Activated naive CD4-positive, alpha-beta T cell treated with anti-CD3 and anti-CD28 coated beads for 36 hours (primary cell): ENCODE measurements at regions of chr1 and their contacts with region 1.

Region 1: GRCh38 chr1:8396786-8397406 is 79.0 kb downstream of the SLC45A1 start:
- DNase-seq: peak; percentile 71
- H3K4me3 Mint-ChIP-seq: peak overlapping the region; percentile 10
- H3K27ac Mint-ChIP-seq: peak overlapping the region; percentile 83
- H3K4me1 Mint-ChIP-seq: peaks cover 71% of the 10 kb centered on the region
- H3K27me3 Mint-ChIP-seq: no peaks in the 10 kb centered on the region

Region 2: DNA sequence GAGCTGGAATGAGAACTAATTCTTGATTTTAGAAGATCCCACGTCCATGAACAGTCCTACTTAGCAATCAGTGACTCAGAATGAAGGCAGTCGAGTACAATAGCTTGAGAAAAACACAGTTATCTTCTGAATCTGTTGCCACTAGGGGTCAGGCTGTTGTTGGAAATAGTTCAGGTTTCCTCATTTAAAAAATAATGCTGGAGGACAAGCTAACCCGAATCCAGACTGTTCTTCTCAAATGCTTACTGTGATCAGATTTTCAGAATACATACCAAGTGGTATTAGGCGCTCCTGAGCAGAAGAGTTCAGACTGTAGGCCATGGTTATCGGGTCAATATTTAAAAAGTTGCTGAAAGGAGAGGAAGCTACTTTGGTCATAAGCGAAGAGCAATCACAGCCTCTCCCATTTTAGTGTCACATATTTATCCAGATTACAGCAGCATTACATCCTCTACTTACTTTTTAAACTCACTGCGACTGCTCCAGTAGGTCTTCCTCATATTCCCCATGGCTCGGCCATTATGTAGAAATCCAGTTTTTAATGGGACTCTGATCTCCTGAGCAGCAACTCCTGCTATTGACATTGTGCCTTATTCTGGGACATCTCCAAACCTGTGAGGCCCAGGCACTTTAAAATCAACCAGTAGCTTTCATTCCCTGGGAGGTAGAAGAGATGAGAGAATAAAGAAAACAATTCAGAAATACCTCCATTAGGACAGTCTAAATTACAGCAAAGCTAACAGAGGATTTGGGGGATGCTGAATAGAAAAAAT is 381.7 kb before region 1 on chr1:
- CTCF ChIA-PET with region 1: no interaction called
- intact Hi-C with region 1: no loop called
- DNase-seq: peak; percentile 56
- H3K4me3 Mint-ChIP-seq: no peak overlapping the region
- H3K27ac Mint-ChIP-seq: no peak overlapping the region
- H3K4me1 Mint-ChIP-seq: no peaks in the 10 kb centered on the region
- H3K27me3 Mint-ChIP-seq: peaks cover 14% of the 10 kb centered on the region

Region 3: DNA sequence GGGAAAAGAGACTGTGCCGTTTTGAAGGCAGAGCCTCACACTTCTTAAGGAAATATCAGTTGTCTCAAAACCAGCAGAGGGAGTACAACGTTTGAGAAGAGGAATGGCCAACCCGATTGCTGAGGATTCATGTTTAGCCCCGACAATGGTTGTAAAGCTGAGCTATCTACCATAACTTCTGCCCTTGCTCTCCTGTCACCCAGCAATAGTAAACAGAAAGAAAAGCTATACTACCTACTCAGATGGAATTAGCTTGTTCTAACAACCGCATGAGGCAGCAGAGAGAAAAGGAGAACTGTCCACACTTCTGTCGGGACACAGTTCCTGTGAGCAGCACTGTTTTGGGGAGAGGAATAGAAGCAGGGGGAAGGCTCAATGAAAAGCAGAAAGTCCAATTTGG is 12.2 kb after region 1 on chr1:
- CTCF ChIA-PET with region 1: interaction called, 9 read pairs
- intact Hi-C with region 1: loop called (anchors 1 kb)
- DNase-seq: peak; percentile 36
- H3K4me3 Mint-ChIP-seq: peak overlapping the region; percentile 47
- H3K27ac Mint-ChIP-seq: peak overlapping the region; percentile 67
- H3K4me1 Mint-ChIP-seq: peaks cover 70% of the 10 kb centered on the region
- H3K27me3 Mint-ChIP-seq: no peaks in the 10 kb centered on the region

Region 4: DNA sequence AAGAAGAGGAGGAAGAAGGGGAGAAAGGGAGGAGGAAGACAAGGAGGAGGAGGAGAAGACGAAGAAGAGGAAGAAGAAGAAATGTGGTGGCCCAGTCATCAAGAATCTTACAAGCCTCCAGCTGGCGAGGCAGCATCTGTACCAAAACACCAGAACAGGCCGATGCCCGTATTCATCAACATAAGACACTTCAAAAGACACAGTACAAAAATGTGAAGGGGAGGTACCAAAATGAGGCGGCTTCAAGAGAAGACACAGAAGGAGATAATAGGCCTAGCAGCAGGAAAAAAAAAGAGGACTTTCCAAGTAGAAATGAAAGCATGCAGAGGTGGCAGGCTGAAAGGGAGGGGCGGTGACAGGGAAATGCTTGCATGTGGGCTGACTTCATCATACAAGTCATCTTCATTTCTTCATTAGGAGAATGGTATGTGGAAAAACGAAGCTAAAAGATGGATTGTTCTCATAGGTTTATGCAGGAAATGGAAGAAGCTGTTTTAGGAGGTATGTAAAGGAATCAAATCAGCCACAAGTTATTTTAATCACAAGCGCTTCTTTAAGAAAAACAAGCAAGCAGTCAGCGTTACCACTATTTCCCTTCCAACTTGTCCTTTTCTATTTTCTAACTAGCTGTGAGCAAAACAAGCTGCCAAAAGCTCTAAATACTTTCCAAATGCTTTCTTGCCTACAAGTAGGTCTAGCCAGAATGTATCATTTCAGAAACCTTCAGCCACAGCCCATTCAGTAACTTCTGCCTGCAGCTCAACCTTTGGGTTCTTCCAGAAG is 113.3 kb after region 1 on chr1:
- CTCF ChIA-PET with region 1: no interaction called
- intact Hi-C with region 1: loop called (anchors 1 kb)
- DNase-seq: peak; percentile 81
- H3K4me3 Mint-ChIP-seq: peak overlapping the region; percentile 54
- H3K27ac Mint-ChIP-seq: peak overlapping the region; percentile 93
- H3K4me1 Mint-ChIP-seq: peaks cover 46% of the 10 kb centered on the region
- H3K27me3 Mint-ChIP-seq: no peaks in the 10 kb centered on the region

Region 5: DNA sequence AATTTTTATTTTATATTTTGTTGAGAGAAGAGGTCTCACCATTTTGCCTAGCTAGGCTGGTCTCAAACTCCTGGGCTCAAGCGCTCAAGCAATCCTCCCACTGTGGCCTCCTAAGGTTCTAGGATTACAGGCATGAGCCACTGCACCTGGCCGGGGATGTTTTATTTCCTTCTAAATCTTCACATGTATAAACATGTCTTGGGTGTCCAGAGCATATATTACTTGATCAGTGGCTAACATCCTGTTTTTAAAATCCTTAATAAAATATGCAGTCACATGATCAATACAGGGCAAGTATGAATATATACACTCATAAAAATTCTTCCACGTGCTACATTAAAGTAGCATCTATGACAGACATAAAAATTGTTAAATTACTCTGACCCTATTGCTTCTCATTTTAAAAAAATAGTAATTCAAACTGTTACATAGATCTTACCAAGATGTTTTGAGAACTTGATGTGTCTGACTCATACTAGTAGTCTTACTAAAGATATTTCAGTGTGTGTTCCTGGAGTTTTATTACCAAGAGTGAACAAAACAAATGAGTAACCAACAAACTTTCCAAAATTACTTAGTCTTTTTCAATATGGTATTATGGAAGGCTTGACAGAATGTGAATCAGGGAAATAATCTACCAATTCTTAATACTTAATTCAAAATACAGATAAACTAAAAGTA is 143.5 kb after region 1 on chr1:
- CTCF ChIA-PET with region 1: interaction called, 5 read pairs
- intact Hi-C with region 1: loop called (anchors 1 kb)
- DNase-seq: no peak
- H3K4me3 Mint-ChIP-seq: no peak overlapping the region
- H3K27ac Mint-ChIP-seq: peak overlapping the region; percentile 56
- H3K4me1 Mint-ChIP-seq: peaks cover 32% of the 10 kb centered on the region
- H3K27me3 Mint-ChIP-seq: no peaks in the 10 kb centered on the region

Region 6: GRCh38 chr1:8590526-8591351 is 193.8 kb after region 1 on chr1:
- CTCF ChIA-PET with region 1: no interaction called
- intact Hi-C with region 1: no loop called
- DNase-seq: peak; percentile 27
- H3K4me3 Mint-ChIP-seq: no peak overlapping the region
- H3K27ac Mint-ChIP-seq: no peak overlapping the region
- H3K4me1 Mint-ChIP-seq: peaks cover 34% of the 10 kb centered on the region
- H3K27me3 Mint-ChIP-seq: no peaks in the 10 kb centered on the region

Region 7: GRCh38 chr1:8817406-8818324 is 420.8 kb after region 1 on chr1 and contains the start of gene RERE:
- CTCF ChIA-PET with region 1: no interaction called
- intact Hi-C with region 1: loop called (anchors 10 kb)
- DNase-seq: peak; percentile 94
- H3K4me3 Mint-ChIP-seq: peak within 1 kb of the TSS; percentile 86
- H3K27ac Mint-ChIP-seq: peak within 1 kb of the TSS; percentile 93
- H3K4me1 Mint-ChIP-seq: peaks cover 45% of the 10 kb centered on the region
- H3K27me3 Mint-ChIP-seq: no peaks in the 10 kb centered on the region
- total RNA-seq, gene RERE: 46.4 to 47.6 TPM